PC-3 (cell line): ENCODE measurements at regions of chr6 and their contacts with region 1.

Region 1: GRCh38 chr6:135722679-135723078 is 128.8 kb upstream of the PDE7B start:
- DNase-seq: peak; percentile 91
- ATAC-seq: peak; percentile 86
- H3K4me3 ChIP-seq: peak overlapping the region; percentile 51
- H3K27ac ChIP-seq: peak overlapping the region; percentile 100
- H3K4me1 ChIP-seq: peaks cover 16% of the 10 kb centered on the region
- H3K27me3 ChIP-seq: no peaks in the 10 kb centered on the region
- CTCF ChIP-seq: no peak

Region 2: DNA sequence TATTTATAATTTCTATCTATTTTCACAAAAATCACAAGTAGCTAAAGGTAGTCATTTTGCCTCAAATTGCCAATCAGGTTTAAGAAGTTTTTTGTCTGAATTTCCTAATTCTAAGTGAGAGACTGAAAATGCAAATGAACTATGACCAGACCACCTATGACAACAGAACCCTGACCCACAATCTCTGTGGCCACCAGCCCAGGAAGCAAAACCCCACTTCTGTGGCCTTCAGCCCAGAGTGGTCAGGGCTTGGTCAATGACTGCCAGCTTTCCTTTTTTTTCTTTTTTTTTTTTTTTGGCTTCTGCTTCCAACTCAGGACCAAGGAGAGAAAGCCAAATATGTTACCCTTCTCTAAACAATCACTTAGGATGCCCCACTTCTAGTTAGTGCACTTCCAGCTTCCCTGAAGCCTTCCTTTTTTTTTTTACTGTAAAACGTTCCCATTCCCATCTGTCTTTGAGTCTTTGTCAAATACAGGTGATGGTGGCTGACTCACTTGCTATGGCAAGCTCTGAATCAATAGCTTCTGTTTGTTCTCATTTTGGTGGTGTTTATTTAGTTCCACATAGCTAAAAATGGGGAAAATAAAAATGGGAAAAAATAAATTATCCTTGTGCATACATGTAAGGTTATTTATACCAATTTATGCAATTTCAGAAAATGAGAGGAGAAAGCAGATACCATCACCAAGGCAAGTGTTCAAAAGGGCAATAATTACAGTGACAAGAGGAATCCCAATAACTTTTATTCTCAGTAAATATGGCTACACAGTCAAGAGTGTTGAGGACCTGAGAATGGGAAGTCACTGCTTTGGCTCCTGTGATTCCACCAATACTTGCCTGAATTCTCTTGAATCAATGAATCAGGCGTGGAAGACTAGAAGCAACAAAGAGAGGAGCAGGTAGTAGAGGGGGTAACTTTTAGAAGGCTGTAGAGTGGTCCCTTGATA is 41.4 kb before region 1 on chr6:
- CTCF ChIA-PET with region 1: no interaction called
- POLR2A ChIA-PET with region 1: no interaction called
- intact Hi-C with region 1: loop called (anchors 5 kb)
- DNase-seq: peak; percentile 73
- ATAC-seq: peak; percentile 92
- H3K4me3 ChIP-seq: no peak overlapping the region
- H3K27ac ChIP-seq: peak overlapping the region; percentile 82
- H3K4me1 ChIP-seq: peaks cover 10% of the 10 kb centered on the region
- H3K27me3 ChIP-seq: no peaks in the 10 kb centered on the region
- CTCF ChIP-seq: no peak